Transverse colon (tissue), 4 donors: ENCODE measurements at regions of chr21 and their contacts with region 1.

Region 1: GRCh38 chr21:26850108-26850643 is 5.0 kb upstream of the ADAMTS1 start:
- DNase-seq: no peak
- H3K4me3 ChIP-seq: no peak overlapping the region
- H3K27ac ChIP-seq: no peak overlapping the region
- H3K4me1 ChIP-seq: peaks cover 0 to 28% (median 14%) of the 10 kb centered on the region in 4 donors
- H3K27me3 ChIP-seq: peaks cover 41% of the 10 kb centered on the region
- CTCF ChIP-seq: peak; percentile 59 to 94 (median 73)
- EP300 ChIP-seq: no peak
- POLR2A ChIP-seq: no peak

Region 2: GRCh38 chr21:27564684-27565301 is 714.6 kb after region 1 on chr21:
- in situ Hi-C with region 1: loop called (anchors 25 kb)
- intact Hi-C with region 1: no loop called
- DNase-seq: peak; percentile 31
- H3K4me3 ChIP-seq: no peak overlapping the region
- H3K27ac ChIP-seq: no peak overlapping the region
- H3K4me1 ChIP-seq: no peaks in the 10 kb centered on the region
- H3K27me3 ChIP-seq: no peaks in the 10 kb centered on the region
- CTCF ChIP-seq: peak; percentile 51 to 63 (median 57)
- EP300 ChIP-seq: no peak
- POLR2A ChIP-seq: no peak

Region 3: DNA sequence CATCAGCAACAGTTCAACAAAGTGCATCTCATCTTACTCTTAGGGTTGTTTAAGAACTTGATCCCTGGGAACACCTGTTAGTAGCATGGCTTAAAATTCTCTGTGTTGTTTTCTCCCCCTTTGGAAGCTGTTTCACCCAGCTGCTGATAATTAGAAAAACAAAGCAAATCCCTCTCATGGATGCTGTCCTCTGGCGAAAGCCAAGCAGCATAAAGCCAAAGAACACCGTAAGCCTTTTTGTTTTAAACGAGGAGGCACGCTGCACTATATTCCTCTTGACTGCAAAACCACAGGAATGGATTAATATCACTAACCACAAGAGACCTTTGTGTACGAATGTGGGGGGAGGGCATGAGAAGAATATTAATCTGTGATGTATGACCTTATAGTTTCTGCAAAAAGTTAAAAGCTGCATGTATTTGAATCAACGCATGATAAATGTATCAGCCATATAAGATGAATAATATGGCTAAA is 1219.3 kb after region 1 on chr21:
- in situ Hi-C with region 1: loop called in 2 of 4 experiments (anchors 25 kb)
- intact Hi-C with region 1: no loop called
- DNase-seq: no peak
- H3K4me3 ChIP-seq: no peak overlapping the region
- H3K27ac ChIP-seq: no peak overlapping the region
- H3K4me1 ChIP-seq: peaks cover 0 to 5% (median 3%) of the 10 kb centered on the region in 4 donors
- H3K27me3 ChIP-seq: no peaks in the 10 kb centered on the region
- CTCF ChIP-seq: no peak
- EP300 ChIP-seq: no peak
- POLR2A ChIP-seq: no peak

Region 4: DNA sequence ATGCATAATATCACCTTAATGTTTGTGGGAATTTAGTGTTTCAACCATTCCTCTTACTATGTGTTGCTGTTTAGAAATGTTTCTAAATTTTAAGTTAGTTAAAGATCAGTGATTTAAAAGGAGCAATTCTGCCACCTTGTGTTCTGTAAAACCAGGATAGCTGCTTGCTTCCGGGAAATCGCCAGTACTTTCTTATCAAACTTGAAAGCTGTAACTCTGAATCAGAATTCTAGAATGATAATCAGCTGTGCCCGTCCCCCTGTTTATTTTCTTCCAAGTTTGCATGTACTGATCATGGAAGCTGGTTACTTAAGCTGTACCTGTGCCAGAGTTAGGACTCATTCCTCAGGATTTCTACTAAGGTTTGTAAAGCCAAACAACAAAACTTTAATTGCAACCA is 1486.1 kb after region 1 on chr21:
- in situ Hi-C with region 1: loop called in 1 of 4 experiments (anchors 25 kb)
- intact Hi-C with region 1: loop called (anchors 5 kb)
- DNase-seq: no peak
- H3K4me3 ChIP-seq: no peak overlapping the region
- H3K27ac ChIP-seq: no peak overlapping the region
- H3K4me1 ChIP-seq: peaks cover 0 to 10% (median 0%) of the 10 kb centered on the region in 4 donors
- H3K27me3 ChIP-seq: no peaks in the 10 kb centered on the region
- CTCF ChIP-seq: peak; percentile 11 to 37 (median 22)
- EP300 ChIP-seq: no peak
- POLR2A ChIP-seq: no peak

Region 5: DNA sequence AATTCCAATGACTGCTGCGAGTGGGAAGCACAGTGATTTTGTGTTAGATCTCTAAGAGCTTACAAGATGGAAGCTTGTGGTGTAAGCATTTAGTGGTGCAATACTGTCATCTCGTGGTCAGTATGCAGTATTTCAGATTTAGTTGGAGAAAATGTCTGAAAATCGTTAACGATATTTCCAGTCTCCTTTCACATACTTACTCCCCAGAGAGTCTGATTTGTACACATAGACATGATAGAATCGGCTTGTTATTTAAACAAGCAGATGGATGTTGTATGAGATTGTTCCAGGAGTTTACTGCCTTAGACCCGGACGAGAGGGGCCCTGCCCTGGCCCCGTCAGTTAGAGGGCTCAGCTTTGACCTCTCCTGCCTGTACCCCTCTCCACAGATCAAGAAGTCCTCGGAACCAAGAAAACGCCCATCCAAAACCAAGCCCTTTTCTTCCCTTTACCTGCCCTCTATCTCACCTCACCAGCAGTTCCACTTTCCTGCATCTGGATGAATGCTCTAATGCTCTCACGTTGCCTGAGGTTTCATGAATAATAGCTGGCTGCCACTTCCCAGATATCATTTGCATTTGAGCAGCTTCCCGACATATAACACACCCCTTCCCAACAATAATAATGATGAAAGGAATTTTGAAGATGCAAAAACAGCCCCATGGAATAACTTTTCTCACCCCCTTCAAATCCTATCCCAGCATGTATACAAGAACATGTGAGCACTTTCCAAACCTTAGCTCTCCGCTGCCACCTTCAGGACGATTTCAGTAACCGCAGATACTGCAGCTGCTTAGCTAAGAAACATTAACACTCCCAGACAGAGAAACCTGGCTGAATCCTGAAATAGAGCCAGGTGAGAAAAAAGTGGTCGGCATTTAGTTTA is 1895.2 kb after region 1 on chr21:
- in situ Hi-C with region 1: loop called in 2 of 4 experiments (anchors 5 to 10 kb)
- intact Hi-C with region 1: no loop called
- DNase-seq: peak; percentile 78
- H3K4me3 ChIP-seq: peak overlapping the region; percentile 17 to 58 (median 36)
- H3K27ac ChIP-seq: peak overlapping the region; percentile 48 to 70 (median 62)
- H3K4me1 ChIP-seq: peaks cover 0 to 9% (median 2%) of the 10 kb centered on the region in 4 donors
- H3K27me3 ChIP-seq: no peaks in the 10 kb centered on the region
- CTCF ChIP-seq: peak; percentile 88 to 99 (median 93)
- EP300 ChIP-seq: no peak
- POLR2A ChIP-seq: no peak